ENCODE measurements at regions of chr7 and their contacts with region 1.

Region 1: GRCh38 chr7:95476904-95477594 is 8.7 kb upstream of the ASB4 start:
- DNase-seq: peak; percentile 76
- ATAC-seq: peak; percentile 48
- H3K4me3 ChIP-seq: no peak overlapping the region
- H3K27ac ChIP-seq: no peak overlapping the region
- H3K4me1 ChIP-seq: no peaks in the 10 kb centered on the region
- H3K27me3 ChIP-seq: no peaks in the 10 kb centered on the region
- CTCF ChIP-seq: peak; percentile 86

Region 2: DNA sequence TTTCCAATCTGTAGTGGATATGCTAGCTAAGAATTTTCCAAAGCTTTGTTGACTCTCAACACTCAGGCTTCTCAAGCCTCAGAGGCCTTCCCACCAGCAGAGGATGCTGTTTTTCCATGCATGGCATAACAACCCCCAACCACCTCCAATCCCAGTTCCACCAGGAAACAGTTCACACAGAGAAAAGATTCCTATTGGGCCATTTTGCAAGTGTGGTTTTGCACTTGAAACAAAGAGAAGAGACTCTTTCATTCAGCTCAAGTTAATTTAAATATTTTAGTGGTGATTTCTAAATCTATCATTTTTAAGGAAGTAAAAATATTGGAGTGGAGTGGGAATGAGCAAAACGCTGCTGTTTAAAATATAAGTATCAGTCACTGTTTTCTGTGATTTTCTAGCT is 1188.0 kb before region 1 on chr7:
- CTCF ChIA-PET with region 1: no interaction called
- POLR2A ChIA-PET with region 1: no interaction called
- intact Hi-C with region 1: loop called (anchors 10 kb)
- DNase-seq: peak; percentile 85
- ATAC-seq: peak; percentile 100
- H3K4me3 ChIP-seq: no peak overlapping the region
- H3K27ac ChIP-seq: no peak overlapping the region
- H3K4me1 ChIP-seq: no peaks in the 10 kb centered on the region
- H3K27me3 ChIP-seq: peaks cover 13% of the 10 kb centered on the region
- CTCF ChIP-seq: peak; percentile 96

Region 3: DNA sequence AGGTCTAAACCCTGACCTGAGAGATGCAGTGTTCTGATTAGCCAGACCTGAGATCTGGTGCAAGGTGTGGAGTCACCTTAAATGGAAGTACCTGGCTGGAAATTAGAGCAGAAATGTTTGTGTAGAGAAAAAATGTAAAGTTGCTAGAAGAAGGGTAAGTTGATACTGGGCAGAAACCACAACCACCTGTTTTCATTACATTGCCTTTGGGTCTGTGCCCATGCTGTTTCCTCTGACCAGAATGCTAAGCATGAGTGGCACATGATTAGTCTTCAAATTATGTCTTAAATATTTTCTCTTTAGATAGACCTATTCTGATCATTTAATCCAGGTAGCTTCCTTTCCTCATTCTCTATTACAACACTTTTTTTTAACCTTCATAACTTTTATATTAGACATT is 898.4 kb before region 1 on chr7:
- CTCF ChIA-PET with region 1: no interaction called
- POLR2A ChIA-PET with region 1: no interaction called
- intact Hi-C with region 1: no loop called
- DNase-seq: peak; percentile 88
- ATAC-seq: peak; percentile 59
- H3K4me3 ChIP-seq: no peak overlapping the region
- H3K27ac ChIP-seq: peak overlapping the region; percentile 8; the same call in 1 of the 2 replicates
- H3K4me1 ChIP-seq: peaks cover 42% of the 10 kb centered on the region
- H3K27me3 ChIP-seq: no peaks in the 10 kb centered on the region
- CTCF ChIP-seq: no peak

Region 4: GRCh38 chr7:94907026-94907810 is 569.8 kb before region 1 on chr7 and contains the start of gene PPP1R9A:
- CTCF ChIA-PET with region 1: no interaction called
- POLR2A ChIA-PET with region 1: no interaction called
- intact Hi-C with region 1: loop called (anchors 10 kb)
- DNase-seq: peak; percentile 65
- ATAC-seq: peak; percentile 80
- H3K4me3 ChIP-seq: peak within 1 kb of the TSS; percentile 95
- H3K27ac ChIP-seq: no peak within 1 kb of the TSS
- H3K4me1 ChIP-seq: peaks cover 10% of the 10 kb centered on the region
- H3K27me3 ChIP-seq: no peaks in the 10 kb centered on the region
- CTCF ChIP-seq: peak; percentile 53
- total RNA-seq, gene PPP1R9A: 5.9 and 9.5 TPM in 2 replicates

Region 5: GRCh38 chr7:95199779-95200558 is 277.1 kb before region 1 on chr7:
- CTCF ChIA-PET with region 1: no interaction called
- POLR2A ChIA-PET with region 1: no interaction called
- intact Hi-C with region 1: loop called (anchors 1 kb)
- DNase-seq: peak; percentile 60
- ATAC-seq: peak; percentile 87
- H3K4me3 ChIP-seq: no peak overlapping the region
- H3K27ac ChIP-seq: no peak overlapping the region
- H3K4me1 ChIP-seq: no peaks in the 10 kb centered on the region
- H3K27me3 ChIP-seq: no peaks in the 10 kb centered on the region
- CTCF ChIP-seq: peak; percentile 81

Region 6: GRCh38 chr7:95263785-95264575 is 213.1 kb before region 1 on chr7:
- CTCF ChIA-PET with region 1: interaction called, 4 read pairs
- POLR2A ChIA-PET with region 1: no interaction called
- intact Hi-C with region 1: loop called (anchors 2 kb)
- DNase-seq: peak; percentile 79
- ATAC-seq: peak; percentile 74
- H3K4me3 ChIP-seq: peak overlapping the region; percentile 25; the same call in 1 of the 2 replicates
- H3K27ac ChIP-seq: peak overlapping the region; percentile 85
- H3K4me1 ChIP-seq: peaks cover 39% of the 10 kb centered on the region
- H3K27me3 ChIP-seq: no peaks in the 10 kb centered on the region
- CTCF ChIP-seq: no peak